ENCODE measurements at regions of chr7 and their contacts with region 1.

Region 1: GRCh38 chr7:155738652-155739537 is 73.4 kb downstream of the SHH start:
- DNase-seq: peak; percentile 85
- ATAC-seq: peak; percentile 68
- H3K4me3 Mint-ChIP-seq: peak overlapping the region; percentile 21
- H3K27ac Mint-ChIP-seq: peak overlapping the region; percentile 72
- H3K4me1 Mint-ChIP-seq: peaks cover 64% of the 10 kb centered on the region
- H3K27me3 Mint-ChIP-seq: no peaks in the 10 kb centered on the region

Region 2: GRCh38 chr7:155205368-155206317 is 533.3 kb before region 1 on chr7:
- CTCF ChIA-PET with region 1: no interaction called
- POLR2A ChIA-PET with region 1: no interaction called
- intact Hi-C with region 1: loop called in 1 of 2 experiments (anchors 5 kb)
- DNase-seq: peak; percentile 95
- ATAC-seq: peak; percentile 84
- H3K4me3 Mint-ChIP-seq: peak overlapping the region; percentile 77
- H3K27ac Mint-ChIP-seq: peak overlapping the region; percentile 100
- H3K4me1 Mint-ChIP-seq: peaks cover 60% of the 10 kb centered on the region
- H3K27me3 Mint-ChIP-seq: no peaks in the 10 kb centered on the region

Region 3: DNA sequence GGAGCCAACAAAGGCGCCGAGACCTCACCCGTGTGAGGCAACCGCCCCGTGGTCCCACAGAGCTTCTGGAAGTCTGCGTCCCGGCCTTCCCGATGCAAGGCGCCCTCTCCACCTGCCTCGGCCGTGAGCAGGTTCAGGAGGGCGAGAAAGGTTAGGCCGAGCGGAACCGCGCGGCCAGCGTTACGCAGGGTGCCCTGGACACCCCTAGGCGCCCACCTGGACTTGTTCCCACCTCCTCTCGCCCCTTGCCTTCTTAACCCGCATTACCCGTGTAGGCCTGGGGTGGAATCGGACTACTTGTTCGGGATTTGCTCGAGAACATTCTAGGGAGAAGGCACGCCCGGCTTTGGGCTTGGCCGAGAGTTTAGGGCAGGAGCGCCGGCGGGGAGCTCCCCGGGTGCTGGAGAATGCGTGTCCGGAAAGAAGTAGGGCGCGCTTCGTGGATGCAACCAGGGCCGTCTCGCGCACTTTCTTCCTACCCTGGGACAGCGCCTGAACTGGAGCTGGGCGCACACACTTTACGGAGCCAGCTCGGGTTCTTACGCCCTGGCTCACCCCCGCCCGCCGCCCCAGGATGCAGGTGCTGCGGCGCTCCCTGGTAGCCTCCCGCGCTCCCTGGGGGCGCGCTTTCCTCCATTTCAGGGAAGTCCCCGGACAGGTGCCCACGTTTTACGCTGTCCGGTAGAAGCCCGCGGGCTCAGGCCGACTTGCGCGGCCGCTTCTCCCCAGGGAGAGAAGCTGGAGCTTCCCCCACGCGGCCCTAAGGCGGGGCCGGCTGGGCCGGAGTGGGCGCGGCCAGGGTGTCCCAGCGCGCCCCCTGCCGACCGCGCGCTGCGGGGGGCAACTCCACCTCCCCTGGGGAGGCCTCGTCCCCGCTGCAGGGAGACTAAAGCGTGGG is 366.8 kb before region 1 on chr7:
- CTCF ChIA-PET with region 1: no interaction called
- POLR2A ChIA-PET with region 1: no interaction called
- intact Hi-C with region 1: loop called in 1 of 2 experiments (anchors 10 kb)
- DNase-seq: peak; percentile 45
- ATAC-seq: peak; percentile 74
- H3K4me3 Mint-ChIP-seq: no peak overlapping the region
- H3K27ac Mint-ChIP-seq: no peak overlapping the region
- H3K4me1 Mint-ChIP-seq: peaks cover 29% of the 10 kb centered on the region
- H3K27me3 Mint-ChIP-seq: peaks cover 65% of the 10 kb centered on the region

Region 4: DNA sequence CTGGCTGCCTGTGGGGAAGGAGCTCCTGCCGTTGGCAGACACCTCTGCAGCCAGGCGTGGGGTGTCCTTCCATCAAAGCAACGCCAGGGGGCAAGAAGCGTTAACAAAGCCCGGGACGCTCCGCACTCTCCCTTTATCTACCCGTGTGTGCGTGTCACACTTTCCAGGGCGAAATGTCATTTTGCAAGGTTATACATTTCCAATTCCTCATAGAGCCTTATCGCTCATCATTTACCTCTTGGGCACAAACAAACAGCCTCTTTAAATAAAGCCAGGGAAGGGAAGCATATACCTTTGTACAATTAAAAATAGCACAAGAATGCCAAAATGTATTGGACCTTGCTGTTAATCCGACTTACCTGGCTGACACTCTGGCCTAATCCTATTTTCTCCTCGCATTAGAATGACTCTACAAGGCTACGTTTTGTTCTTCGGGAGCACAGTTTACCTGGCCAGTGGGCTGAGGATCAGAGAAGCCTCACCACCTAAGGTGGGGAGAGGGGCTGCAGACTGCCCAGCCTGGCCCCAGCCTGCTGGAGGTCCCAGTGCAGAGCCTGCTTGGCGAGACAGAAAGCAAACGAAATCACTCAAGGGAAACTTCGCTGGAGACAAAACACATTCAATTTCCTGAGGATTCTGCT is 358.6 kb before region 1 on chr7:
- CTCF ChIA-PET with region 1: interaction called, 5 read pairs
- POLR2A ChIA-PET with region 1: no interaction called
- intact Hi-C with region 1: loop called (anchors 1 to 10 kb)
- DNase-seq: peak; percentile 89
- ATAC-seq: peak; percentile 94
- H3K4me3 Mint-ChIP-seq: no peak overlapping the region
- H3K27ac Mint-ChIP-seq: no peak overlapping the region
- H3K4me1 Mint-ChIP-seq: peaks cover 23% of the 10 kb centered on the region
- H3K27me3 Mint-ChIP-seq: peaks cover 79% of the 10 kb centered on the region

Region 5: GRCh38 chr7:155466814-155467733 is 271.8 kb before region 1 on chr7:
- CTCF ChIA-PET with region 1: no interaction called
- POLR2A ChIA-PET with region 1: no interaction called
- intact Hi-C with region 1: loop called in 1 of 2 experiments (anchors 5 kb)
- DNase-seq: peak; percentile 81
- ATAC-seq: peak; percentile 70
- H3K4me3 Mint-ChIP-seq: no peak overlapping the region
- H3K27ac Mint-ChIP-seq: no peak overlapping the region
- H3K4me1 Mint-ChIP-seq: peaks cover 11% of the 10 kb centered on the region
- H3K27me3 Mint-ChIP-seq: peaks cover 76% of the 10 kb centered on the region

Region 6: GRCh38 chr7:155782466-155782865 is 43.6 kb after region 1 on chr7:
- CTCF ChIA-PET with region 1: no interaction called
- POLR2A ChIA-PET with region 1: no interaction called
- intact Hi-C with region 1: no loop called
- DNase-seq: no peak
- ATAC-seq: no peak
- H3K4me3 Mint-ChIP-seq: no peak overlapping the region
- H3K27ac Mint-ChIP-seq: no peak overlapping the region
- H3K4me1 Mint-ChIP-seq: peaks cover 3% of the 10 kb centered on the region
- H3K27me3 Mint-ChIP-seq: peaks cover 3% of the 10 kb centered on the region

Measured in activated CD4-positive, alpha-beta T cell treated with anti-CD3 and anti-CD28 coated beads for 36 hours (primary cell).